ENCODE measurements at regions of chr6 and their contacts with region 1.

Region 1: DNA sequence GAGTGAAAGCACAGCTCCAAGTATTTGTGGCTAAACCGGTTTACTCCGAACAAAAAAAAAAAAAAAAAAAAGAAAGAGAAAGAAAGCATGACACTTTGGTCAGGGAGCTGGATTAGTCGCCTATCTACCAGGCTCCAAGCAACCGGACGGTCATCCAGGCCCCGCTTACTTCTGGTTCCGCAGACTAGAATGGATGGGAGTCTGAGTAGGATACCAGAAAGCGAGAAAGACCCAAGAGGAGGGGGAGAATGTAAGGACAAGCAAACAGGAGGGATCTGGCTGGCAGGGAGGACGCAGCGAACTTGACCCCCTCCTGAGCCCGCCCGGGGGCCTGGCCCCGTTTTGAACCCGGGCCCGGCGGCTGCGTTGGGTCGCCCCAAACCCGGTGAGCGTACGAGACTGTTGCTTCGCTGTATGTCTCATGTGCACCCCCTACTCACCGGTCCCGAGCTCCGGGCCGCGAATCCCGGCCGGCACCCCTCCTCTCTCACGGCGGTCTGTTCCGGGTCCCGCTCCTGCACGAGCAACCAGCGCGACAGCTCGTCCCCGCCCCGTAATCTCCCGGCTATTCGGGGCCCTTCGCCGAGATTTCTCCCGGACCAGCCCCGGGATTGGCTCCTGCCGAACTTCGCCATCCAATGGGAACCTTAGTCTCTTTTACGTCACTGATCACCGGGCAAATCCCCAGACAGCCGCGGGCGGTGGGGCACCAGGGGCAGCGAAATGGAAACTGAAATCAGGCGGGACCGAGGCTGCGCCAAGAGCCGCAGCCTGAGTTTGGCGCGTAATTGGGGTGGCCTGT is at the start of gene TRIM26:
- H3K4me3 Mint-ChIP-seq: peak within 1 kb of the TSS; percentile 99
- H3K27ac Mint-ChIP-seq: peak within 1 kb of the TSS; percentile 97
- H3K4me1 Mint-ChIP-seq: peaks cover 60% of the 10 kb centered on the region
- H3K27me3 Mint-ChIP-seq: no peaks in the 10 kb centered on the region

Region 2: GRCh38 chr6:30066577-30067459 is 146.2 kb before region 1 on chr6 and contains the start of gene PPP1R11:
- intact Hi-C with region 1: loop called (anchors 2 kb)
- H3K4me3 Mint-ChIP-seq: peak within 1 kb of the TSS; percentile 88
- H3K27ac Mint-ChIP-seq: peak within 1 kb of the TSS; percentile 96
- H3K4me1 Mint-ChIP-seq: peaks cover 69% of the 10 kb centered on the region
- H3K27me3 Mint-ChIP-seq: peaks cover 24% of the 10 kb centered on the region

Region 3: GRCh38 chr6:30326526-30327260 is 113.6 kb after region 1 on chr6 and contains the start of gene TRIM39:
- intact Hi-C with region 1: loop called (anchors 2 kb)
- H3K4me3 Mint-ChIP-seq: peak within 1 kb of the TSS; percentile 86
- H3K27ac Mint-ChIP-seq: peak within 1 kb of the TSS; percentile 99
- H3K4me1 Mint-ChIP-seq: peaks cover 52% of the 10 kb centered on the region
- H3K27me3 Mint-ChIP-seq: no peaks in the 10 kb centered on the region

Region 4: DNA sequence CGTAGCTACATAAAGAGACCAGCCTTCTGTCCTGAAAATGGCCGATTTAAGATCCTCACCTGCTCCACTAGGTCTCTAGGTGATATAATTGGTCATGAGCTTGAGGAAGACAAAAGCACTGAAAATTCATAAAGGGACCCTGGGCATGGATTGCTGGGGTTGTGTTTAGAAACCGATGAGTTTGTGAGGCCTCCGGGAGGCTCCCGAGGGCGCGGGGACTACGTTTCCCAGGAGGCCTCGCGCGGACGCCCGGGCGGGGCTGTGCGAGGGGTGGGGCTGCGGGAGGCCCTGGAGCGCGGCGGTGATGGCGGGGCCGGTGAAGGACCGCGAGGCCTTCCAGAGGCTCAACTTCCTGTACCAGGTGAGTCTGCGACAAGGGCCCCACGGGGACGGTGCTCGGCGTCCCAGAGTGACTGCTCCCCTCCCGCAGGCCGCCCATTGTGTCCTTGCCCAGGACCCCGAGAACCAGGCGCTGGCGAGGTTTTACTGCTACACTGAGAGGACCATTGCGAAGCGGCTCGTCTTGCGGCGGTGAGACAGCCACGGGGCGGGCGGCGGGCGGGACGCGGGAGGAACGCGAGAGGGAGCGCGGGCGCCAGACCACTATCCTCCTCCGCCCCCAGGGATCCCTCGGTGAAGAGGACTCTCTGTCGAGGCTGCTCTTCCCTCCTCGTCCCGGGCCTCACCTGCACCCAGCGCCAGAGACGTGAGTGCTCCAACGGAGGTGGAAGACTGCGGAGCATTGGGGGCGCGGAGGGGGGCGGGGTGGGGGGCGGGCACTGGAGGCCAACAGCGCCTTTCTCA is 132.0 kb after region 1 on chr6 and contains the start of gene RPP21:
- intact Hi-C with region 1: loop called (anchors 5 kb)
- H3K4me3 Mint-ChIP-seq: peak within 1 kb of the TSS; percentile 80
- H3K27ac Mint-ChIP-seq: peak within 1 kb of the TSS; percentile 77
- H3K4me1 Mint-ChIP-seq: peaks cover 22% of the 10 kb centered on the region
- H3K27me3 Mint-ChIP-seq: peaks cover 12% of the 10 kb centered on the region

Measured in dendritic cell treated with granulocyte-macrophage colony-stimulating factor and Interleukin-4, amounts not matched to agents 40 ng/mL and 50 ng/mL, for 4 days (primary cell).